Panc1 (cell line): ENCODE measurements at regions of chr3 and their contacts with region 1.

Region 1: GRCh38 chr3:160498202-160498601 is 48.6 kb upstream of the TRIM59 start:
- DNase-seq: no peak
- ATAC-seq: peak; percentile 47; the same call in 1 of the 2 replicates
- H3K4me3 ChIP-seq: no peak overlapping the region
- H3K27ac ChIP-seq: no peak overlapping the region
- H3K4me1 ChIP-seq: no peaks in the 10 kb centered on the region
- H3K27me3 ChIP-seq: no peaks in the 10 kb centered on the region
- CTCF ChIP-seq: no peak

Region 2: DNA sequence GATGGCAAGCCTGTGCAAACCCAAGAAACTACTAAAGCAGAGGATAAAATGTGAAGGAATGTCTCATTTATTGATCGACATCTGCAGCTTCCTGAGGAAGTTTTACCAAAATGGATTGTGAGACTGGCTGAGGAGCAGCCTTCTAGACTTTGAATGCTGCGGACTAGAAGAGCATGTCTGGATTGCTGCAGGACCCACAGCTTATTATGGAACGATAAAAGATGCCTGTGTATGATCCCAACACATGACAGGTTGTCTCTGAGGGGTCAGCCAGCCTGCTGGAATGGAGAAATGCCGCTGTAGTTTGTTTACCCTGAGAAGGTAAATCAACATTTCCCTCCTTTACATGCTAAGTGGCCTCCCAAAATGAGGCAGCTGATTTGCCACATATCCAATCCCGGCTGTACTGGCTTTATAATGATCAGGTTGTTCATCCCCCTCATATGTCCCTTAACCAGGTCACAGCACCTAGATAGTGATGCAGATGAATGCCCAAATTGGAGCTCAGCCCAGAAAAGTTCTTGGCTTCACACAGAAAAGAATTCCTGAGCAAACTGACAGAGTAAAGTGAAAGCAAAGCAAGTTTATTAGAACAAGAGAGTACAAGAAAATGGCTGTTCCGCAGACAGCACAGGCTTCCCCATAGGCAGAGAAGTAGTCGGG is 445.7 kb before region 1 on chr3:
- CTCF ChIA-PET with region 1: no interaction called
- POLR2A ChIA-PET with region 1: interaction called, 16 read pairs
- in situ Hi-C with region 1: no loop called
- intact Hi-C with region 1: no loop called
- DNase-seq: no peak
- ATAC-seq: peak; percentile 56
- H3K4me3 ChIP-seq: peak overlapping the region; percentile 9 to 37; a peak in 3 of 4 replicates
- H3K27ac ChIP-seq: peak overlapping the region; percentile 12; the same call in 1 of the 2 replicates
- H3K4me1 ChIP-seq: peaks cover 9% of the 10 kb centered on the region; the same call in 1 of the 2 replicates
- H3K27me3 ChIP-seq: no peaks in the 10 kb centered on the region
- CTCF ChIP-seq: no peak

Region 3: GRCh38 chr3:160331127-160331937 is 166.9 kb before region 1 on chr3:
- CTCF ChIA-PET with region 1: no interaction called
- POLR2A ChIA-PET with region 1: no interaction called
- in situ Hi-C with region 1: no loop called
- intact Hi-C with region 1: no loop called
- DNase-seq: peak; percentile 56
- ATAC-seq: no peak
- H3K4me3 ChIP-seq: no peak overlapping the region
- H3K27ac ChIP-seq: peak overlapping the region; percentile 5; the same call in 1 of the 2 replicates
- H3K4me1 ChIP-seq: no peaks in the 10 kb centered on the region
- H3K27me3 ChIP-seq: no peaks in the 10 kb centered on the region
- CTCF ChIP-seq: no peak

Region 4: DNA sequence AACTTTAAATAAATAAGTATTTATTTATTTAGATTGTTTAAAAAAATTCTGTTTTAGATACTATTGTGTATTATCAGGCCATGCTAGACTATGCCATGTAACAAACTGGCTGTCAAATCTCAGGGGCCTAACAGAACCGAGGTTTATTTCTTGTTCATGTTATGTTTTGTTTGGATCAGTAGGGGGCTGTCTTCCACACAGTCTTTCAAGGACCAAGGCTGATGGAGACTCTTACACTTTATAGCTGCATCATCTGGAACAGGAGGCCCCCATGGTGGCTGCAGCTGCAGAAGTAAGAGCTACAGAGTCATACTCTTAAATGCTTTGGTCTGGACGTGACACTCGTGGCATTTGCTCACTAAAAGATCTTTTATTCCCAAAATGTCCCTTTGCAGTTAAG is 145.8 kb after region 1 on chr3:
- CTCF ChIA-PET with region 1: no interaction called
- POLR2A ChIA-PET with region 1: no interaction called
- in situ Hi-C with region 1: no loop called
- intact Hi-C with region 1: no loop called
- DNase-seq: no peak
- ATAC-seq: peak; percentile 62
- H3K4me3 ChIP-seq: no peak overlapping the region
- H3K27ac ChIP-seq: no peak overlapping the region
- H3K4me1 ChIP-seq: 0 out of 2 replicates have a peak, but pooled peaks cover 4% of the 10 kb centered on the region
- H3K27me3 ChIP-seq: no peaks in the 10 kb centered on the region
- CTCF ChIP-seq: peak; percentile 41; the same call in 1 of the 2 replicates